GM10248 (cell line): ENCODE measurements at regions of chr15 and their contacts with region 1.

Region 1: DNA sequence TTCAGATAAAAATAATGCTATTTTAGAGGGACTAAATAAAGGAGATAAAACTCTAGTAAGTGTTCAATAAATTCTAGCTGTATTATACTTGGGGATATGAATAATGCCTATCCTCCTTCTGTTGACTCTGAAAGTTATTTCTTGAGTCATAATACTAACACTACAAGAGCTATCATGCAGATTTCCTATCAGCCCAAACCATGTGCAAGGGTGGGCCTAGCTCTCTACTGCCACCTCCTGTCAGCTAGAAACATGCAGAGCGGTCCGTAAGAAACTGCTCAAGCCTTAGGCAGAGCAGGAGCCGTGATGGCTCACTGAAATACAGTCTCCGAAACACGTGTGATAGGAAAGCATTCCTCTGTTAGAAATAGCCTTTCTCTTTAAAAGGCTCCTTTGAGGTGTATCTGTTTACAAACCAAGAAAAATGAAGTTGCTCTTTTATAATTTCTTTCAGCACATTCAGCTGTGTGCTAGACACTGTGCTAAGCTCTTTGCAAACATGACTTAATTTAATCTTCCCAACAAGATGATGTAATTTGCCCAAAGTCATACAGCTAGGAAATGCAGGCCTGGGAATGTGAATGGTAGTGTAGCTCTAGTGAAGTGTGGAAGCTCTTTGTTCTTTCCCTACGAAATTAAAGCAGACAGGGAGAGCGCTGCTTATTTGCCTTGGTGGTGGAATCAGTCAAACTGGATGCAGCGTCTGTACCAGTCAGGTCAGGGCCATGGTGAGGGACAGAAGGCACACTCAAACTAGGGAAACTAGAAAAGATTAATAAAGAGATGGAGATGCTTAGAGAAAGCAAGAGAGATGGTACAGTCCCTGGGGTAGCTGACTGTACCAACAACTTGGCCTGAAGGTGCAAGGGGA is 43.1 kb downstream of the MTHFS start:
- DNase-seq: peak; percentile 58
- CTCF ChIP-seq: peak; percentile 93

Region 2: DNA sequence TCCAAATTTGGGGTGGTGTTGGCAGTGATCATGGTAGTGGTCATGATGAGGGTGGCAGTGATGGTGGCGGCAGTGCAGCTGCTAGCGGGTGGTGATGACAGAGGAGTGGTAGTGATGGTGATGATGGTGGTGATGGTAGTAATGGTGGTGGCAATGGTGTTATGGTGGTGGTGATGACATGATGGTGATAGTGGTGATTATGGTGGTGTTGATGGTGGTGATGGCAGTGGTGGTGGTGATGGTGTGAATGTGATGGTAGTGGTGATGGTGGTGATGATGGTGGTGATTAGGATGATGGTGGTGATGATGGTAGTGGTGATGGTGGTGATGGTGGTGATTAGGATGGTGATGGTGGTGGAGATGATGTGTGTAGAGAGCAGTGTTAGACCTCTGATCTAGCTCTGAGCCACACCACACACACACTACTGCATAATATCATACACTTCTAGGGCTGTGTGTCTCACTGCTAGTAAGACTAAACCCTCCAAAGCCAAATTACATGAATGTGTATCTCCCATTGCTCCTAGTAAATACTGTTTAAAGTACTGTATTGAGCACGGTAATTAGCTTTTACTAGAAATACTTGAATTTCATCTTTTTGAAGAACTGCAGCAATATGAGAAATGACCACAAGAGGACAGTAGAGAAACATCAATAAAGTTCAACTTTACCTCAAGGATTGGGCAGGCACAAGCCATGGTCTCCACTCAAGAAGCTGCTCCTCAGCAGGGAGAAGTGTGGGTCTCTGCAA is 514.0 kb before region 1 on chr15:
- CTCF ChIA-PET with region 1: interaction called, 33 read pairs
- POLR2A ChIA-PET with region 1: no interaction called
- DNase-seq: peak; percentile 40
- CTCF ChIP-seq: peak; percentile 45

Region 3: DNA sequence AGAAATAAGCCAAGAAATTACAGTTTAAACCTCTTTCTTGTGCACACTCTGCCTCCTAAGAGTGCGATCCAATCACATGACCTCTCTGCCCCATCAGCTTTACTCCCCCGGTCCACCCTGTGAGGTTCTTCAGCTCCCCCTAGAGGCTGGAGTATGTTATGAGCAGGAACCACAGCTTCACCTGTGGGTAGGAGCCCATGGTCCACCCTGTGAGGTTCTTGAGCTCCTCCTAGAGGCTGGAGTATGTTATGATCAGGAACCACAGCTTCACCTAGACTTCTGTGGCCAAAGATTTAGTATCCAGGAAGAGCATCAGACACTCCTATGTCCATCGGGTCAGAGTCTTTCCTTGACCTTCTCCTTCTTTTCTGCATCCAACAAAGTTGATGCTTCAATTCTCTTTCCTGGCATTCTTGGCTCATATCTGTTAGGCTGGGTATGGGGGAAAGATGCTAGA is 257.6 kb before region 1 on chr15:
- CTCF ChIA-PET with region 1: interaction called, 19 read pairs
- POLR2A ChIA-PET with region 1: no interaction called
- DNase-seq: peak; percentile 86
- CTCF ChIP-seq: peak; percentile 89

Region 4: GRCh38 chr15:79820820-79821219 is 32.9 kb before region 1 on chr15:
- CTCF ChIA-PET with region 1: interaction called, 10 read pairs
- POLR2A ChIA-PET with region 1: no interaction called
- DNase-seq: no peak
- CTCF ChIP-seq: no peak

Region 5: GRCh38 chr15:79837846-79838245 is 15.8 kb before region 1 on chr15:
- CTCF ChIA-PET with region 1: interaction called, 32 read pairs
- POLR2A ChIA-PET with region 1: no interaction called
- DNase-seq: no peak
- CTCF ChIP-seq: no peak

Region 6: GRCh38 chr15:79872358-79873017 is 18.8 kb after region 1 on chr15:
- CTCF ChIA-PET with region 1: interaction called, 31 read pairs
- POLR2A ChIA-PET with region 1: no interaction called
- DNase-seq: no peak
- CTCF ChIP-seq: no peak

Region 7: GRCh38 chr15:79989682-79990081 is 136.0 kb after region 1 on chr15:
- CTCF ChIA-PET with region 1: interaction called, 15 read pairs
- POLR2A ChIA-PET with region 1: no interaction called
- DNase-seq: no peak
- CTCF ChIP-seq: no peak

Region 8: DNA sequence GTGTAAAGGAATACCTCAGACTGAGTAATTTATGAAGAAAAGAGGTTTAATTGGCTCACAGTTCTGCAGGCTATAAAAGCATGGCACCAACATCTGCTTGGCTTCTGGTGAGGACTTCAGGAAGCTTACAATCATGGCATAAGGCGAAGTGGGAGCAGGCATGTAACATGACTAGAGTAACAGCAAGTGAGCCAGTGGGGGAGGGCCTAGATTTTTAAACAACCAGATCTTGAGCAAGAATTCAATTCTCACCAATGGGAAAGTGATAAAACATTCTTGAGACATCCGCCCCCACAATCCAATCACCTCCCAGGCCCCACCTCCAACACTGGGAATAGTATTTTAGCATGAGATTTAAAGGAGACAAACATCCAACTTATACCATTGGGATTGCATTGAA is 161.5 kb after region 1 on chr15:
- CTCF ChIA-PET with region 1: no interaction called
- POLR2A ChIA-PET with region 1: no interaction called
- DNase-seq: no peak
- CTCF ChIP-seq: no peak

Region 9: GRCh38 chr15:80343554-80343992 is 489.9 kb after region 1 on chr15:
- CTCF ChIA-PET with region 1: no interaction called
- POLR2A ChIA-PET with region 1: no interaction called
- DNase-seq: no peak
- CTCF ChIP-seq: no peak